Natural killer cell (primary cell): ENCODE measurements at regions of chr20 and their contacts with region 1.

Region 1: GRCh38 chr20:35454881-35455609 is at the start of gene CEP250:
- DNase-seq: peak; percentile 87 to 96
- ATAC-seq: peak; percentile 98 to 100 (median 99)
- H3K4me3 ChIP-seq: peak within 1 kb of the TSS; percentile 98
- H3K4me3 Mint-ChIP-seq: peak within 1 kb of the TSS; percentile 96
- H3K27ac ChIP-seq: peak within 1 kb of the TSS; percentile 100
- H3K27ac Mint-ChIP-seq: peak within 1 kb of the TSS; percentile 95
- H3K4me1 ChIP-seq: peaks cover 10% of the 10 kb centered on the region
- H3K4me1 Mint-ChIP-seq: peaks cover 0 to 5% of the 10 kb centered on the region in 2 donors
- H3K27me3 ChIP-seq: no peaks in the 10 kb centered on the region
- H3K27me3 Mint-ChIP-seq: no peaks in the 10 kb centered on the region
- CTCF ChIP-seq: no peak
- total RNA-seq, gene CEP250: 61.5 to 91.8 (median 80.8) TPM

Region 2: GRCh38 chr20:35954200-35954906 is 499.3 kb after region 1 on chr20 and contains the start of gene SCAND1:
- intact Hi-C with region 1: loop called (anchors 2 kb)
- DNase-seq: peak; percentile 95 to 99
- ATAC-seq: peak; percentile 85 to 95 (median 85)
- H3K4me3 ChIP-seq: peak within 1 kb of the TSS; percentile 97
- H3K4me3 Mint-ChIP-seq: peak within 1 kb of the TSS; percentile 99
- H3K27ac ChIP-seq: peak within 1 kb of the TSS; percentile 100
- H3K27ac Mint-ChIP-seq: peak within 1 kb of the TSS; percentile 98 to 100
- H3K4me1 ChIP-seq: peaks cover 18% of the 10 kb centered on the region
- H3K4me1 Mint-ChIP-seq: peaks cover 17 to 25% of the 10 kb centered on the region in 2 donors
- H3K27me3 ChIP-seq: no peaks in the 10 kb centered on the region
- H3K27me3 Mint-ChIP-seq: no peaks in the 10 kb centered on the region
- CTCF ChIP-seq: peak; percentile 96
- total RNA-seq, gene SCAND1: 51.4 to 70.3 (median 63.9) TPM